ENCODE measurements at regions of chr14 and their contacts with region 1.

Region 1: DNA sequence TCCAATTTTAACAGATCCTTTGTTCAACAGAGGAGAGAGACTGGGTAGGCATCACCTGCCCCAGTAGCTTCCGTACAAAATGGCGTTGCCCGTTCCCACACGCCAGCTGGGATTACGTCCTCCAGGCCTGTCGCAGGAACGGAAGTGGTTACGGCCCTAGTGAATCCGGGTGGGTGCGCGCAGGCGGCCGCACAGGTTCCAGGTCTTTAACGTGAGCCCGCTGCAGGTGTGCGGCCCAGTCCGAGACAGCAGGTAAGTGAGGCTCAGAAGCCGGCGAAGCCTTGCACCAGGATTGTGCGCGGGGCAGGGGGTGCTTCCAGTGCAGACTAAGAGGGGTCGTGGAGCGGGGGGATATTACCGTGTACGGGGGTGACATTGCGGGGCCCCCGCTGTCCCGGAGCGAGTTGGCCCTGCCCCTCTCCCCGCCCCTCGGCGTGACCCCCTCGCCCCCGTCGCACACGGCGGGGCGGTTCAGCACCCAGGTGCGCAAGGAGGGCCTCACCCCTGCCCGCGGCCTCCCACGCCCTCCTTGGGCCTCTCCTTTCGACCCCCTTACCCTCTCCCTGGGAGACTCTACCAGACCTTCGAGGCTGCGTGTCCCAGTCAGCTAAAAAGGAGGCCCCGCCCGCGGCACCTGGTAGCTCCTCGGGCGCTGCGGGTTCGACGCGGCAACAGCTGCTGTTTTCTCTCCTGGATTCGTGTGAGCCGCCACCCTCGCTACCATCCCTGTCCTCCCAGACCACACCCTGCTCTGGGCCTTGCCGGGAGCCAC is at the start of gene EXD2:
- DNase-seq: peak; percentile 91
- ATAC-seq: peak; percentile 97
- H3K4me3 ChIP-seq: peak within 1 kb of the TSS; percentile 66 to 71
- H3K27ac ChIP-seq: peak within 1 kb of the TSS; percentile 81
- H3K4me1 ChIP-seq: peaks cover 6 to 16% of the 10 kb centered on the region in 2 experiments; a peak in 3 of 4 replicates
- H3K27me3 ChIP-seq: no peaks in the 10 kb centered on the region
- CTCF ChIP-seq: no peak
- POLR2A ChIP-seq: peak; percentile 43
- RAD21 ChIP-seq: no peak
- total RNA-seq, gene EXD2: 20.2 TPM

Region 2: DNA sequence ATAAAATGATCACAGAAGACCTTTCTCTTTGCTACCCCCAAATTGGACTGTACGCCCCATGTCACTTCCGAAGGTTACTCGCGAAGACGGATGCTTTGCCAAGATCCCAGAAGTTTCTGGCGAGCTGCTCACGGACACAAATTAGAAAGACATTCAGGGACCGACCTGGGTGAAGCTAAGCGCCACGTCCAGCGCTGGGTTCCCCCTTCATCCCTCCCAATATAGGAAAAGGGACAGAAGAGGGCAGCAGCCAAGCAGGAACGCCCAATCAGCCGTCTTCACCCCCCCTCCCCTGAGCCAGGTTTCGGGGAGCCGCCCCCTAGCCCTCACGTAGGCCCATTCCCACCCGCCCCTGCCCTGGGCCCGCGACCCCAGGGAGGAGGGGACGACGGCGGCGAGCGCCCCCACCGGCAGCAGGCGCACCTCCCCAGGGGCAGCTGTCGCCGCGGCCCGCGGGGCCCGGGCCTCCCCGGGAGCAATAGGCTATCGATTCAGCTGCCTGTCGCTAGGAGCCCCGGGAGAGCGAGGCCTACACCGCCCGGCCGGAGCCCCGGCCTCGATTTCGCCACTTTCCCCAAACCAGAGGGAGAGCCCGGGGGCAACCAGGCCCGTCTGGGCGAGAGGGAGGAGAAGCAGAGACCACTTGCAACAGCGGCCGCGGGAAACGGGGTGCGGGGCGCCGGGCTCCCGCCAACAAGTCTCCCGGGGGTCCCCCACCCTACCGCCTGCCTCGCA is 40.0 kb before region 1 on chr14:
- CTCF ChIA-PET with region 1: interaction called, 3 read pairs
- POLR2A ChIA-PET with region 1: no interaction called
- RAD21 ChIA-PET with region 1: no interaction called
- intact Hi-C with region 1: loop called (anchors 2 kb)
- DNase-seq: peak; percentile 48
- ATAC-seq: peak; percentile 64
- H3K4me3 ChIP-seq: peak overlapping the region; percentile 82 to 83
- H3K27ac ChIP-seq: peak overlapping the region; percentile 89
- H3K4me1 ChIP-seq: peaks cover 22 to 29% of the 10 kb centered on the region in 2 experiments
- H3K27me3 ChIP-seq: no peaks in the 10 kb centered on the region
- CTCF ChIP-seq: peak; percentile 27 to 47 (median 32); a peak in 4 of 6 replicates
- POLR2A ChIP-seq: no peak
- RAD21 ChIP-seq: peak; percentile 42